Body of pancreas (tissue), 4 donors: ENCODE measurements at regions of chr1 and their contacts with region 1.

Region 1: DNA sequence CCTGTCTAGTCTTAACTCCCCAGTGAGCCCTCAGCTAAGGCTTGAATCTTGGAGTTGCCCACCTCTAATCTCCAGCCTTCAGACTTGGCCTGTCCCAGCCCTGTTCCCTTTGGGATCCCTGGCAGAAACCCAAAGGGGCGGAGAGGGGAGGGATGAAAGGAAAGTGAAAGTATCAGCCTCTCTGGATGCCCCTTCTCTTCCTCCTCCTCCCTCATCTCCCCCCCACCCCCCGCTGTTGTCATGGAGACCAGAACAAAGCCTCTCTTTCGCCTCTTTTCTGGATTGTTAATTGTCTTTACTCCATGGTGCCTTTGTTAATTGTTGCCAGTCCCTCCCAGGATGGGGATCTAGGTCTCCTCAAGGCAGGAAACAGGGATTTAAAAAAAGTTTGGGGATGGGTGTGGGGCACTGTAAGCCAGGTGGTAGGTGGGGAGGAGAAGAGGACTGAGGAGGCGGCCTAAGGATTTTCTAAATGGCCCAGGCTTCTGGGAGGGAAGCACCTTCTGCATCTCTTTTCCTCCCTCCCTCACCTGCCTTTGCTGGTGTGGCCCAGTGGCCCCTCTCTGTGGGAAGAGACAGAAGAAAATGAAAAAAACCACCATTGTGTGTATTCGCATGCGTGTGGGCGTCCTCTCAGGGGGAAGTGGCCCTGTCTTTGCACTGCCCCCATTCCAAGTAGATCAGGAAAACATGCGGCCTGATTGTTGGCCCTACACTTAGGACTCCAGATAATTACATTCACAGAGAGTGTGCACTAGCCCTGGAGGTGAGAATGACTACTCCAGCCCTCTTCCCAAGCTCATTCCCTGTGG is 7.5 kb upstream of the SOX13 start:
- DNase-seq: peak in 3 of 4 donors; percentile 43 to 44 (median 43)
- ATAC-seq: peak; percentile 65
- H3K4me3 ChIP-seq: no peak overlapping the region
- H3K27ac ChIP-seq: no peak overlapping the region
- H3K4me1 ChIP-seq: no peaks in the 10 kb centered on the region
- H3K27me3 ChIP-seq: no peaks in the 10 kb centered on the region
- CTCF ChIP-seq: no peak
- POLR2A ChIP-seq: no peak

Region 2: DNA sequence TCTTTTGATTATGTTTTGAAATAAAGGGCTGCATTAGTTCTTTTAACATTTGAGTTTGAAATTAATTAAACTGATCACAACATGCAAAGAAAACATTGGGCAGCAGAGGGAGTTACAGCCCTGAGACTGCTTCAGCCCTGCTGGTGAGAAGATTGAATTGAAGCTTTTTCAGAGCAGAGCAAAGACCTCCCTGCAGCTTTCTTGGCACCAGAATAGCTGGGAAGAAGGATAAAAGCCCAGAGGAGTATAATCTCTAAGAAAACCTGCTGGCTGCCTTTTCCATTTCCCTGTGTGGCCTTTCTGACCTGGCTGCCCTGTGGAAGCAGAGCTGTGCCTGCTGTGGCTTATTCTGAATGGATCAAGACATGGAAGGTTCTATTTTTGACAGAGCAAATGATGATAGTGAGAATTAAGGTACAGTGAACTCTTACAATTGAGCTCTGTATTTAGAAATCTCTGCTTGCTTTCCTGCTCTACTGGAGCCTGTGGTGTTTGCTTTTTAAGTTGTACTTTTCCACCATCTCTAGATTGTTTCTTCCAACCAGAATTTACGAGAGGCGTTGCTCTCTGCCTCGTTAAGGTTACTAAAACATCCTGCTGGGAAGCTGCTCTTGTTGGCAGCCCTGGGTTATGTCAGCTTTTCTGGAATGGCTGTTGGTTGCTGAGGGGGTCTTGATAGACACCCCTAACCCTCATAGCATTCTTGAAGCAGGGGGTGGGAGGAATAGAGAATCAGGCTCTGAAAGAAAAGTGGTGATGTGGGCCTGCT is 194.1 kb before region 1 on chr1:
- intact Hi-C with region 1: loop called (anchors 10 kb)
- DNase-seq: peak; percentile 31 to 57 (median 38)
- ATAC-seq: peak; percentile 85
- H3K4me3 ChIP-seq: no peak overlapping the region
- H3K27ac ChIP-seq: peak overlapping the region in 1 of 4 donors; percentile 27
- H3K4me1 ChIP-seq: peaks cover 9% of the 10 kb centered on the region
- H3K27me3 ChIP-seq: no peaks in the 10 kb centered on the region
- CTCF ChIP-seq: peak; percentile 57 to 98 (median 93)
- POLR2A ChIP-seq: no peak